CD4-positive, alpha-beta T cell (primary cell): ENCODE measurements at regions of chrX and their contacts with region 1.

Region 1: DNA sequence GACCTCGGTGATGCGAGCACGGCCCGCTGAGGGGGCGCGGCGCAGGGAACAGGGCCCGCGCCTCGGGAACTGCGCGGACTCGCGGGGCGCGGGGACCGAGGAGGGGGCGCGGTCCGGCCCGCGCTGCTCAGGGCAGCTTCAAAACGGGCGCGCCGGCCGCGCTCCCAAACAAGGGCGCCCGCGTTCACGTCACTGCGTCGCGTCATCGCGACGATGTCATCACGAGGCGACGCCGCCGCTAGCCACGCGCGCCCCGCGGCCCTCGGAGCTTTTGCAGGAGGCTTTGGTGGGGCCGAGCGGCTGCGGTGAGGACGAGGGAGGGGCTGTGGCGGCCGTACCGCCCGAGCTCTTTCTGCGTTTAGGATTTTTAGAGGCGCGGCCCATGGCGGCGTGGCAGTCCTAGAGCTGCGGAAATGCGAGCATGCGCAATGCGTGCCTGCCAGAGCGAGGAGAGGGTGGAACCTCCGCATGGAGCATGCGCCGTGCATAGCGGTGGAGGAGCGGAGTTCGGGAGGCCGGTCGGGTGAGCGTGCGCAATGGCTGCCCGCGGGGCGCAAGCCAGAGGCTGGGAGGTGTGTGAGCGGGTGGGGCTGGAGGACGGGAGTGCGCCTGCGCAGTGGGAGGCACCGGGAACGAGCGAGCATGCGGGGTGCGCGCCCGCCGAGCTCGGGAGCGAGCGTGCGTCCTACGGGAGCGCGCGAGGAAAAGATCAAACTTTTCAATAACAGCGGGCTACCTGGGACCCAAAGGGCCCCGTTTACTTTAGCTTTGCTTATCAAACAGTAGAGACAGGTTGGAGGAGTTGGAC is at the start of gene PPP2R3B:
- DNase-seq: peak; percentile 95 to 100 (median 99)
- ATAC-seq: peak; percentile 93
- H3K4me3 ChIP-seq: peak within 1 kb of the TSS; percentile 82
- H3K4me3 Mint-ChIP-seq: peak within 1 kb of the TSS; percentile 87
- H3K27ac ChIP-seq: peak within 1 kb of the TSS; percentile 100
- H3K27ac Mint-ChIP-seq: peak within 1 kb of the TSS; percentile 94
- H3K4me1 ChIP-seq: peaks cover 16% of the 10 kb centered on the region
- H3K4me1 Mint-ChIP-seq: peaks cover 9% of the 10 kb centered on the region
- H3K27me3 ChIP-seq: no peaks in the 10 kb centered on the region
- H3K27me3 Mint-ChIP-seq: no peaks in the 10 kb centered on the region
- CTCF ChIP-seq: no peak
- total RNA-seq, gene PPP2R3B: 12.1 to 14.0 TPM

Region 2: DNA sequence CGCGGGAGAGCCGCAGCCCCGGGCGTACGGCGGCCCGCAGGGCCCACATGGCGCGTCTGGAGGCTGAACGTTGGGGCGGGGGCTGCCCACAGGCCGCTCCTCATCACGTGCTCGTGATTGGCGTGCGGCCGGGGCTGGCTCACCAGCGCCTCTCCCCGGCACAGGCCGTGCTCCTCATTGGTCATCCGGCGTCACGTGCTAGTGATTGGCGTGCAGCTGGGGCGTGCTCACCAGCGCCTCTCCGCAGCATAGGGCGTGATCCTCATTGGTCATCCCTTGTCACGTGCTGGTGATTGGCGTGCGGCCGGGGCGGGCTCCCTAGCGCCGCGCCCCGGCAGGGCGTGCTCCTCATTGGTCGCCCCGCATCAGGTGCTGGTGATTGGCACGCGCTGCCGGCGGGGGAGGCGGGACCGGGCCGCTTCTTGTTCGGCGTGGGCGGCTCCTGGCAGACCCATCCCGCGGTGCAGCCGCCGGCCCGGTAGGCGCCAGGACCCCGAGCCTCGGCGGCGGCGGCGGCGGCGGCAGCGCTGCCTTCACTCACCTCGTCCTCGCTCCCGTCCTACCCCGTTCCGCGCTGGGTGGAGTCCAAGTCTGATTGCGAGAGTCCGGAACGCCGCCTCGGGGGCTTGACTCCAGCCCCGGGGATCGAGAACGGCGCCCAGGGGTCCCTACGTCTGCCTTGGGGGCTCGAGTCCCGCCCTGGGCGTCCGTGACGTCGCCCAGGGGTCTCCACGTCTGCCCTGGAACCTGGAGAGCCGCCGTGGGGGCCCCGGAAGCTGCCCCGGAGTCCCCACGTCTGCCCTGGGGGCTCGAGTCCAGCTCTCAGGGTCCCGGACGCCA is 68.0 kb before region 1 on chrX and contains the start of gene GTPBP6:
- CTCF ChIA-PET with region 1: no interaction called
- POLR2A ChIA-PET with region 1: no interaction called
- intact Hi-C with region 1: loop called (anchors 2 to 5 kb)
- DNase-seq: peak; percentile 96 to 100 (median 98)
- ATAC-seq: peak; percentile 63
- H3K4me3 ChIP-seq: peak within 1 kb of the TSS; percentile 97
- H3K4me3 Mint-ChIP-seq: peak within 1 kb of the TSS; percentile 91
- H3K27ac ChIP-seq: peak within 1 kb of the TSS; percentile 89 to 94
- H3K27ac Mint-ChIP-seq: peak within 1 kb of the TSS; percentile 94
- H3K4me1 ChIP-seq: peaks cover 50% of the 10 kb centered on the region
- H3K4me1 Mint-ChIP-seq: peaks cover 34% of the 10 kb centered on the region
- H3K27me3 ChIP-seq: no peaks in the 10 kb centered on the region
- H3K27me3 Mint-ChIP-seq: peaks cover 4% of the 10 kb centered on the region
- CTCF ChIP-seq: no peak
- total RNA-seq, gene GTPBP6: 53.5 to 53.9 TPM

Region 3: GRCh38 chrX:338836-339400 is 48.1 kb before region 1 on chrX:
- CTCF ChIA-PET with region 1: no interaction called
- POLR2A ChIA-PET with region 1: no interaction called
- intact Hi-C with region 1: no loop called
- DNase-seq: peak in 2 of 14 experiments; percentile 30 to 53
- ATAC-seq: peak; percentile 39
- H3K4me3 ChIP-seq: no peak overlapping the region
- H3K4me3 Mint-ChIP-seq: no peak overlapping the region
- H3K27ac ChIP-seq: no peak overlapping the region
- H3K27ac Mint-ChIP-seq: no peak overlapping the region
- H3K4me1 ChIP-seq: no peaks in the 10 kb centered on the region
- H3K4me1 Mint-ChIP-seq: no peaks in the 10 kb centered on the region
- H3K27me3 ChIP-seq: no peaks in the 10 kb centered on the region
- H3K27me3 Mint-ChIP-seq: no peaks in the 10 kb centered on the region
- CTCF ChIP-seq: no peak

Region 4: DNA sequence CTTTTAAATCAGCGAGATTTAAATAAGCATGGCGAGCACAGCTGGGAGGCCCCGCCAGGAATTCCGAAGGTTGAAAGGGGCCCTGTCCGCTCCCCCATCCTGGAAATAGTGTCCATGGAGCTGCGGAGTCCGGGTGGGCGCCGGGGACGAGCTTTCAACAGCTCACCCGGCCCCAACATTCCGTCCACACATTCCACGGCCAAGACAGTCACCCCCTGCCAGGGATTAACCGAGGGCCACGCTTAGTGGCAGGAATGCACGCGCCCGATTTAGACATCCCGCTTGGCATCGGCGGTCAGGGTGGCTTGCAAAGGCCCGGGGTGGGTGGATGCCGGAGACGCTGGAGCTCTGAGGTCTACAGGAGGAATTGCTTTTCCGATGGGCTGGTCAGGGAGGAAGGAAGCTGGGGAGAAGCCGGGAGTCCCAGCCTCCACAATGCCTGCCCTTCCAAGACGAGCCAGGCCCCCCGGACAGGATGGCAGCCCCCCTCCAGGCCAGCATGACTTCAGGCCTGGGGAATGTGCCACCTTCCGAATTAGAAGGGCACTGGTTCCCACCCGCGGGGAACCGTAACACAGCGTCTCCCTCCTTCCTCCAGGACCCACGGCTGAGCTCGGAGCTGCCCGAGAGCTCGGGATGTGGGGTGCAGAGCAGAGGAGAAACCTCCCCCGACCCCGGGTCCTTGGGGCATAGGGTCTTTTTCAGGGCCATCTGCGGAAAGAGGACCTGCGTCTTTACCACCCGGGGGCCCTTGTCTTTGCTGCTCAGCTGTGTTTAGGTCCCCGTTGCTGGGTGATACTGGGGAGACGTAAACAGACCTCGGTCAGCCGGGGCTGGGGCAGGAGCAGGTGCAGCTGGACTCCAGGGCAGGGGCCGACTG is 26.6 kb after region 1 on chrX:
- CTCF ChIA-PET with region 1: no interaction called
- POLR2A ChIA-PET with region 1: no interaction called
- intact Hi-C with region 1: no loop called
- DNase-seq: no peak
- ATAC-seq: no peak
- H3K4me3 ChIP-seq: no peak overlapping the region
- H3K4me3 Mint-ChIP-seq: no peak overlapping the region
- H3K27ac ChIP-seq: no peak overlapping the region
- H3K27ac Mint-ChIP-seq: no peak overlapping the region
- H3K4me1 ChIP-seq: no peaks in the 10 kb centered on the region
- H3K4me1 Mint-ChIP-seq: no peaks in the 10 kb centered on the region
- H3K27me3 ChIP-seq: peaks cover 0 to 5% of the 10 kb centered on the region in 2 experiments
- H3K27me3 Mint-ChIP-seq: peaks cover 3% of the 10 kb centered on the region
- CTCF ChIP-seq: no peak